GM10248 (cell line): ENCODE measurements at regions of chr5 and their contacts with region 1.

Region 1: GRCh38 chr5:134101686-134102439 is 12.6 kb upstream of the TCF7 start:
- DNase-seq: peak; percentile 78
- CTCF ChIP-seq: peak; percentile 77

Region 2: DNA sequence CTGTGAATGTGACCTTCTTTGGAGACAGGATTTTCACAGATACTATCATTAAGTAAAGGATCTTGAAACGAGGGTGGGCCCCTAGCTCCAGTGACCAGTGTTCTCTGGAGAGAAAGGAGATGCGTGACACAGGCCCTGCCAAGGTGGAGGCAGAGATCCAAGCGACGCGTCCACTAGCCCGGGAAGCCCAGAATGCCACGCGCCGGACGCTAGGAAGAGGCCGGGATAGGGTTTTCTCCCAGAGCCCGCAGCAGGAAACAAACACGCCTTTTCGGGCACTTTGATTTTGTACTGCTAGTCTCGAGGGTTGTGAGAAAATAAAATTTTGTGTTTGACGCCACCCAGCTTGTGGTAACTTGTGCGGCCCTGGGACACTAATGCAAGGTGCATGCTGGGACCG is 67.5 kb before region 1 on chr5:
- CTCF ChIA-PET with region 1: interaction called, 35 read pairs
- POLR2A ChIA-PET with region 1: no interaction called
- DNase-seq: no peak
- CTCF ChIP-seq: no peak

Region 3: GRCh38 chr5:134070725-134071613 is 30.9 kb before region 1 on chr5:
- CTCF ChIA-PET with region 1: interaction called, 31 read pairs
- POLR2A ChIA-PET with region 1: no interaction called
- DNase-seq: peak; percentile 67
- CTCF ChIP-seq: peak; percentile 3

Region 4: GRCh38 chr5:134083517-134083916 is 18.3 kb before region 1 on chr5:
- CTCF ChIA-PET with region 1: interaction called, 38 read pairs
- POLR2A ChIA-PET with region 1: interaction called, 5 read pairs
- DNase-seq: no peak
- CTCF ChIP-seq: no peak